Activated naive CD4-positive, alpha-beta T cell treated with anti-CD3 and anti-CD28 coated beads for 36 hours (primary cell): ENCODE measurements at regions of chr12 and their contacts with region 1.

Region 1: DNA sequence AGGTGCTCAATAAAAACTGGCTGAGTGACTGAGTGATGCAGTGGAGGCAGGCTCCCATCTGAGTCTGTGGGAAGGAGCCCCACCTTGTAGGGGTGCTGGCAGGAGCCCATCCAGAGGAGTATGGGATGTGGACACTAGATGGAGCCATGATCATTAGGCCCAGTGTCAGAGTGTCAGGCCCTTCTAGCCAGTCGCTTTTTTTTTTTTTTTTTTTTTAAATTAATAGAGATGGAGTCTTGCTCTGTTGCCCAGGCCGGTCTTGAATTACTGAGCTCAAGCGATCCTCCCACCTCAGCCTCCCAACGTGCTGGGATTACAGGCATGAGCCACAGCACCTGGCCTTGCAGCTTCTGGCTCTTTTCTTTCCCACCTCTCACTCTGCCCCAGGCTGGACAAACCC is 11.5 kb downstream of the RITA1 start:
- DNase-seq: peak; percentile 83
- H3K4me3 Mint-ChIP-seq: no peak overlapping the region
- H3K27ac Mint-ChIP-seq: no peak overlapping the region
- H3K4me1 Mint-ChIP-seq: peaks cover 6% of the 10 kb centered on the region
- H3K27me3 Mint-ChIP-seq: no peaks in the 10 kb centered on the region

Region 2: DNA sequence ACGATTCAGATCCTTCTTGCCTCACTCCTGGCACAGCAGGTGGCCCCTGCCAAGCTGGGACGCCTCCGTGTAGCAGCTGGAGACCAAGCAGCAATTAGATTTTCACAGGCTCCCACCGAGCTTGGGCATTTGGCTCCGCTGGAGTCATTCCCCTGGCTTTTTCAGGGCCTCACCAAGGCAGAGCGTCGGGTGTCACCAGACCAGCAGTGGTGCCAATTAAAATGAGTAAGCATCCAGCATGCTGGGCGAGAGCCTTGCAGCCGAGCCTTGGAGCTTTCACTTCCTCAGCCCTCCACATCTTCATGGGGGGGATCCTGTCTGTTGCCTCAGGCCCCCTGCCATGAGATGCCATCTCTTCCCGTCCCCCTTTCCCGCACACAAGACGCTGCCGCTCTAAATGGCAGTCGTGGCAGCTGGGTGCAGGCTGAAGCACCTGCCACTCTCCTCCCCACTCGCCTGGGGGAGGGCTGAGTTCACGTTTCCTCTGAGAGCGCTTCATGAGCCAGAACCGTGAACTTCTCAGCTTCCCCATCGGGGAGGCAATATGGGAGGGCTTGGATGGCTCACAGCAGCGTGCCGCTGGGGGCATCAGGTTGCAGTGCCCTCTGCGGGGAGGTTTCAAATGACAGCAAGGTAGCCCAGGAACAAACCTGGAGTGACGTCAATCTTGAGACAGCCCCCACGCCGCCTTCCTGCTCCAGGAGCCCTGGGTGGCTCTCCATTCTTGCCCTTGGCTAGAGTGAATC is 36.0 kb after region 1 on chr12:
- CTCF ChIA-PET with region 1: interaction called, 4 read pairs
- intact Hi-C with region 1: loop called (anchors 1 kb)
- DNase-seq: peak; percentile 83
- H3K4me3 Mint-ChIP-seq: peak overlapping the region; percentile 66
- H3K27ac Mint-ChIP-seq: peak overlapping the region; percentile 88
- H3K4me1 Mint-ChIP-seq: peaks cover 70% of the 10 kb centered on the region
- H3K27me3 Mint-ChIP-seq: no peaks in the 10 kb centered on the region

Region 3: DNA sequence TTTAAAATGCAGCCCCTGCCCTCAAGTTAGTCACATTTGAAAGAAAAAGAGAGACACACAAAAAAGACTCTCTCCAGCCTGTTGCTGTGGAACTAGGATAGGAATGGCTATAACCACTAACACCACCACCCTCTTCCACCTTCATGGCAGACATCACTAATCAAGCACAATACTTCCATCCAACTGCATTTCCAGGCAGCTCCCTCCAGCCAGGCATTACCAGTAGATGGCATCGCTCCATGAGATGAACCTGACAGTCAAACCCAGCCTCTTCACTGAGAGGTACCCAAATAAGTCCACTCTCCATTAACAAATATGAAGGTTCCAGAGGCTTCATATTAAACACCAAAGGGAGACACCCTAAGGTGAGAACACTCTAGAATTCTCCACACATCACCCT is 113.5 kb after region 1 on chr12:
- CTCF ChIA-PET with region 1: interaction called, 3 read pairs
- intact Hi-C with region 1: loop called (anchors 2 kb)
- DNase-seq: no peak
- H3K4me3 Mint-ChIP-seq: no peak overlapping the region
- H3K27ac Mint-ChIP-seq: peak overlapping the region; percentile 16
- H3K4me1 Mint-ChIP-seq: peaks cover 2% of the 10 kb centered on the region
- H3K27me3 Mint-ChIP-seq: no peaks in the 10 kb centered on the region

Region 4: GRCh38 chr12:113358381-113359132 is 161.6 kb after region 1 on chr12 and contains the start of gene PLBD2:
- CTCF ChIA-PET with region 1: no interaction called
- intact Hi-C with region 1: loop called (anchors 1 kb)
- DNase-seq: peak; percentile 96
- H3K4me3 Mint-ChIP-seq: peak within 1 kb of the TSS; percentile 84
- H3K27ac Mint-ChIP-seq: peak within 1 kb of the TSS; percentile 88
- H3K4me1 Mint-ChIP-seq: peaks cover 17% of the 10 kb centered on the region
- H3K27me3 Mint-ChIP-seq: no peaks in the 10 kb centered on the region
- total RNA-seq, gene PLBD2: 13.9 to 14.1 TPM

Region 5: DNA sequence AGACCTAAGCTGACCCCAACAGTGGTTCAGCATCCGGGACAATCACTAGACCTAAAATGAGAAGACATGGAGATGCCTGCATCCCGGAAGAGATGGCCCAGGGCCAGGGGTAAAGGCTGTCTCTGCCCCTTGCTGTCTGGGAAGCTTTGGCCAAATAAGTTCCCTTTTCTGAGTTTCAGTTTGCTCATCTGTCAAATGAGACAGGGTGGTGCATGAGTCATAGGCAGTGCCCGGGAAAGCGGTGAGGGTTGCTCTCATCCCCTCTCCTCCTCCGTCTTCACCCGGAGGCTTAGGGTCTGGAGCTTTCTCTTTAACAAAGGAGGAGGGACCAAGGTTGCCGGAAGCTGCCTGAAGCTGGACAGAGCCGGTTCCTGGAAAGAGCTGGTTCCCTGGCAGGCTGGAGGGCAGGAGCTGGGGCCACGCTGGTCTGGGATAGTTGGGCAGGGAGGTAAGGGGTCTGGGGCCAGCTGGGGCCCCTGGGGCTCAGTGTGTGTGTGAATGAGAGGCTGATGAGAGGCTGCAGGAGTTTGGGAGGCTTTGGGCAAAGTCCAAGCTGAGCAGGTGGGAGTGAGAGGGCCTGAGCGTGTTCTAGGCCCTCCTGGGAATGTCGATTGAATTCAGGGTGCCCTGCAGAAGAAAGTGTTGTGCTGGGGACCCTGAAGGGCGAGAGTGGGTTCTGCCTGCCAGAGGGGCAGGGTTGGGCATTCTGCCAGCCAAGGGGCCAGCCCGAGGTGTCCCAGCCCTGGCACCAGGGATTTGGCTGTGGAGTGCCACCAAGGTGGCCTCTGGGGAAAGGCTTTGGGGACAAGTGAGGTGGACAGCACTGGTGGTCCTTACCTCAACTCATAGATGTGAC is 225.3 kb after region 1 on chr12 and contains the start of gene SDSL:
- CTCF ChIA-PET with region 1: interaction called, 4 read pairs
- intact Hi-C with region 1: loop called (anchors 1 kb)
- DNase-seq: peak; percentile 66
- H3K4me3 Mint-ChIP-seq: no peak within 1 kb of the TSS
- H3K27ac Mint-ChIP-seq: no peak within 1 kb of the TSS
- H3K4me1 Mint-ChIP-seq: peaks cover 10% of the 10 kb centered on the region
- H3K27me3 Mint-ChIP-seq: peaks cover 3% of the 10 kb centered on the region
- total RNA-seq, gene SDSL: not detected

Region 6: DNA sequence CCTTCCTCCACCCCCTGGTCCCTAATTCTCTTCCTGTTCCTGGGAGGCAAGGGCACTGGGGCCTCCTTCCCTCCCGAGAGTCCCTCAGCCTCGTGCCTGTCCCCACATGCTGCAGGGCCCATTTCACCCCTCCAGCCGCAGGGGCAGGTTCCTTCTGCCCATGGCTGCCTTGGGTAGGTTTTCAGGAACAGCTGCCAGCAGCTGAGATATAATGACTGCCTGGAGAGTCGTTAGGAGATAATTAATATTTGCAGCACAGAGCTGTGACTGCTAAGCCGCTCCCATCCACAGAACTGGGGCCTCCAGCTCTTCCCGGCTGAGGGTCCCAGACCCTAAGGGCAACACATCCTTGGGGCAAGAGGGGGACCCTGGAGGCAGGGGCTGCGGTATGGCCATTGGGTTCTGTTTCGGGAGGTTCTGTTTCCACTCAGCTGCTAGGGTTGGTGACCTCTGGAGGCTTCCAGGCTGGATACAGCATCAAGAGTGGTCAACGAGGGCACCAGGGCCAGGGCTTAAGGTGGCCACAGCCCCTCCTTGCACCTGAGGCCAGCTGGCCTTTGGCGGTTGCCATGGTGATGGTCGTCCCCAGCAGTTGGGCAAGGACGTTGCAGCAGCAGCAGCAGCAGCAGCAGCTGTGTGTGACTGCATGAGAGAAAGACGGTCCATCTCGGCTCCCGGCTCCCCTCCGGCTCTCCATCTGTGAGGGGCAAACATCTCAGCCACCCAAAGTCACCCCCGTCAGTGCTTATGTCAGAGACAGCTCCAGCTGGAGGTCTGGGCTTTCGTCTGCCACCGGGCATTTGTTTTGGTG is 486.8 kb after region 1 on chr12:
- CTCF ChIA-PET with region 1: no interaction called
- intact Hi-C with region 1: no loop called
- DNase-seq: no peak
- H3K4me3 Mint-ChIP-seq: no peak overlapping the region
- H3K27ac Mint-ChIP-seq: no peak overlapping the region
- H3K4me1 Mint-ChIP-seq: no peaks in the 10 kb centered on the region
- H3K27me3 Mint-ChIP-seq: peaks cover 3% of the 10 kb centered on the region

Region 7: DNA sequence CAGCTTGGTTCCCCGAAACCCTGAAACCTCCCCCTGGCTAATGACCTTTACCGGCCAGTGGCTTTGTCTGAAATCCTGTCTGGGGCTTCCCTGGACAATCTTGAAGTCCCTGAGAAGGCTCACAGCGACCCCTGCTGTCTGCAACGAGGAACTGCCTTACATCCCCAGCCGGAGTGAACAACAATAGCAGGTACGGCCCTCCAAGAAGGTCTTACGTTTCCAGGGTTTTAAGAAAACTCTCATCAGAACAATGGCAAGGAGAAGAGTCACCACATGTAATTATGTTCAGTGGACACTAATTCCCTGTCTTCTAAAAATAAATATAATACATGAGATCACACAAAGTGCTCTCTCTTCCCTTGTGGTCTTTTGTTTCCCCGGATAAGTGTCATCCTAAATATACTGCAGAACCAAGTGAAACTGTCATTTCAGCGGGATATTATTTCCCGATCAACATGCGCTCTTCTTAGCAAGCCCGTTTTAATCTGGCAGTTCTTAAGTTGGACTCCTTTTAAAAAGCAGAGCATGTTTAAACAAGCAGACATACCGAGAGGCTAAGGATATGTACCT is 715.8 kb after region 1 on chr12:
- CTCF ChIA-PET with region 1: no interaction called
- intact Hi-C with region 1: loop called (anchors 5 kb)
- DNase-seq: peak; percentile 67
- H3K4me3 Mint-ChIP-seq: no peak overlapping the region
- H3K27ac Mint-ChIP-seq: no peak overlapping the region
- H3K4me1 Mint-ChIP-seq: no peaks in the 10 kb centered on the region
- H3K27me3 Mint-ChIP-seq: no peaks in the 10 kb centered on the region